H1 (cell line): ENCODE measurements at regions of chr1 and their contacts with region 1.

Region 1: DNA sequence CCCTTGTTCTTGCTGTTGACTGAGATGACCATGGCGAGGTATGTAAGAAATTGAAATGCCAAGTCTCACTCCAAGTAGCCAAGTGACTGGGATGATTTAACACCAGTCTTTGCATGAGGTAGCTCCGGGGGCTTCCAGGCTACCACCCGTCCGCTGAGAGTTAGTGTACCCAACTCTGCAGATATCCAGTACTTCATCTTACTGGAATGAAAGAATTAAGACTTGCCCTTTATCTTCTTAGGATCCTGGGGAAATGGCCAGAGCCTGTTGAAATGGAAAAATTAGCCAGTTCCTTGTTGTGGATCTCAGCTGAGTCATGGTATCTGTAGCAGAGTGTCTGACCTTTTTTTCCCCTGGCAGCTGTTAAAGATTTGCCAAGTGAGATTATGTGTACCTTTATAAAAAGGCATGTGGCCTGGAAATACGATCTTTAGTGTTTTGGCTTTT is 151.0 kb downstream of the MAST2 start:
- DNase-seq: no peak
- H3K4me3 ChIP-seq: peak overlapping the region in 1 of 4 experiments; percentile 26; a peak in 2 of 8 replicates
- H3K27ac ChIP-seq: no peak overlapping the region
- H3K4me1 ChIP-seq: peaks cover 0 to 14% (median 7%) of the 10 kb centered on the region in 4 experiments; a peak in 4 of 7 replicates
- H3K27me3 ChIP-seq: no peaks in the 10 kb centered on the region
- CTCF ChIP-seq: no peak
- EP300 ChIP-seq: no peak
- POLR2A ChIP-seq: no peak
- RAD21 ChIP-seq: no peak

Region 2: DNA sequence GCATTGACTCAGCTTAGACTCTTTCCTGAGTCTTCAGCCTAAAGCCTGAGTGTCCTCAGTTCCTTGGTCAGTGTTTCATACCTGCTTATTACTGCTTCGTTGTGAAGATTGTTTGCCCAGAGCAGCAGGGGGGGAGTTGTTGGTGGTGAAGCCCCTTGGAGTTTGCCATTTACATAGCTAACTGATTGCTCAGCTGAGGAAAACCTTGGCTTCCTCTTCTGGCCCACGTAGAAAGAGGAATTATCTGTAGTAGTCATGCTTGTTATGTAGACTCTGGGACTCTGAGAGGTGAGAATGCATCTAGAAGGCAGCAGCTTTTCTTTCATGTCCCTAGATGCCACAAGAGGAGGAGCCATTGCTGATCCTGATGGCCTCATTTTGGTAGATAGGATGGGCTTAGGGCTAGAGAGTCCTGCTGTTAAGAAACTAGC is 25.2 kb before region 1 on chr1:
- CTCF ChIA-PET with region 1: no interaction called
- POLR2A ChIA-PET with region 1: interaction called, 10 read pairs
- DNase-seq: peak in 1 of 2 experiments; percentile 47
- H3K4me3 ChIP-seq: 0 out of 8 replicates have a peak overlapping the region, but pooled peaks of 1 of the 4 experiments have one; percentile 13
- H3K27ac ChIP-seq: no peak overlapping the region; the same call in 1 of the 2 replicates
- H3K4me1 ChIP-seq: peaks cover 7 to 28% (median 19%) of the 10 kb centered on the region in 4 experiments
- H3K27me3 ChIP-seq: no peaks in the 10 kb centered on the region
- CTCF ChIP-seq: no peak
- EP300 ChIP-seq: no peak
- POLR2A ChIP-seq: no peak
- RAD21 ChIP-seq: no peak